Psoas muscle (tissue), 8 donors: ENCODE measurements at regions of chr17 and their contacts with region 1.

Region 1: GRCh38 chr17:4412933-4413831 is 20.6 kb upstream of the SPNS3 start:
- DNase-seq: peak; percentile 93 to 97
- ATAC-seq: peak; percentile 95 to 98 (median 98)
- H3K4me3 ChIP-seq: no peak overlapping the region
- H3K27ac ChIP-seq: no peak overlapping the region
- H3K4me1 ChIP-seq: peaks cover 5% of the 10 kb centered on the region
- H3K27me3 ChIP-seq: no peaks in the 10 kb centered on the region
- CTCF ChIP-seq: peak; percentile 94

Region 2: GRCh38 chr17:4199818-4200402 is 213.3 kb before region 1 on chr17:
- intact Hi-C with region 1: loop called (anchors 2 kb)
- DNase-seq: no peak
- ATAC-seq: peak in 3 of 4 donors; percentile 32 to 55 (median 39)
- H3K4me3 ChIP-seq: no peak overlapping the region
- H3K27ac ChIP-seq: no peak overlapping the region
- H3K4me1 ChIP-seq: peaks cover 10% of the 10 kb centered on the region
- H3K27me3 ChIP-seq: no peaks in the 10 kb centered on the region
- CTCF ChIP-seq: peak; percentile 74